Activated CD8-positive, alpha-beta T cell treated with anti-CD3 and anti-CD28 coated beads for 36 hours (primary cell): ENCODE measurements at regions of chr15 and their contacts with region 1.

Region 1: DNA sequence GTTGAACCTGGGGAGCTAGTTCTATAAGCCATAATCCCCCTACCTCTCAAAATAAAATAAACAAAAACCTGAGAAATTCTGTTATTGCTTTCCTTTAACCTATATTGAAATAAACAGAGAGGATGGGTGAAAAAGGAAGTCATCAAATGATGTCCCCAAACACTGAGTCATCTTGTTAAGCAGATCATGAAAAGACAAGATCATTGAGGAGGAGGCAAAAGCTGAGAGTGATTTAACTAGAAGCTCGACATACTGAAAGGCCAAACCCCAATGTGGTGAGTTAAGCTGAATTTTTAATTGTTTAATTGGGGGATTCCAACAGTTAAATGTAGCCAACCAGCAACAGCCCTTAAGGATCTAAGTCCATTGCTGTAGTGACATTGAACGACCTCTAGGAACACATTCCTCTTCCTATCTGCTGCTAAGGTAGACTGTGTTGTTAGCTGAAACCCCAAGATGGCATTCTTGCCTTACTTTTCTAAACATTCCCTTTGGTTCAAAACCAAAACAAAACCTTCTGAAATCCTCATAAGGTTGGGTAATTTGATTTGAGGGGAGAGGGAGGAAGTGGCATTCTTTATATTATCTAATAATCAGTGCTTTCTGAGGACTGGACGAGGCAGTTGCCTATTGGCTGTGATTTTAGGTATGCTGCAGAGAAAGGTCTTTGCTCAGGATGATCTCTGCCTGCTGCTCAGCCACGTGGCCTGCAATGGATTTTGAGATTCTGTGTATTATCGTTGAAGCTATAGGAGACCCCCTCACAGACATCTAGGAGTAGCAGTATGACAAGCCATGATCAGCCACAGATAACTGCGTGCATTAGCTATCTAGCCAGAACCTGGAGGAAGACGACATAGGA is 62.7 kb upstream of the BNIP2 start:
- DNase-seq: no peak
- ATAC-seq: peak; percentile 91
- H3K4me3 Mint-ChIP-seq: no peak overlapping the region
- H3K27ac Mint-ChIP-seq: no peak overlapping the region
- H3K4me1 Mint-ChIP-seq: peaks cover 7% of the 10 kb centered on the region
- H3K27me3 Mint-ChIP-seq: peaks cover 2% of the 10 kb centered on the region
- CTCF ChIP-seq: peak; percentile 68

Region 2: GRCh38 chr15:59656897-59657634 is 94.7 kb before region 1 on chr15 and contains the start of gene GTF2A2:
- CTCF ChIA-PET with region 1: no interaction called
- POLR2A ChIA-PET with region 1: no interaction called
- intact Hi-C with region 1: no loop called
- DNase-seq: peak; percentile 97
- ATAC-seq: peak; percentile 100
- H3K4me3 Mint-ChIP-seq: peak within 1 kb of the TSS; percentile 32
- H3K27ac Mint-ChIP-seq: no peak within 1 kb of the TSS
- H3K4me1 Mint-ChIP-seq: peaks cover 7% of the 10 kb centered on the region
- H3K27me3 Mint-ChIP-seq: no peaks in the 10 kb centered on the region
- CTCF ChIP-seq: no peak
- total RNA-seq, gene GTF2A2: 167 to 173 TPM

Region 3: GRCh38 chr15:59762558-59762957 is 10.8 kb after region 1 on chr15:
- CTCF ChIA-PET with region 1: interaction called, 12 read pairs
- POLR2A ChIA-PET with region 1: no interaction called
- intact Hi-C with region 1: no loop called
- DNase-seq: peak; percentile 4
- ATAC-seq: no peak
- H3K4me3 Mint-ChIP-seq: no peak overlapping the region
- H3K27ac Mint-ChIP-seq: no peak overlapping the region
- H3K4me1 Mint-ChIP-seq: no peaks in the 10 kb centered on the region
- H3K27me3 Mint-ChIP-seq: no peaks in the 10 kb centered on the region
- CTCF ChIP-seq: no peak

Region 4: DNA sequence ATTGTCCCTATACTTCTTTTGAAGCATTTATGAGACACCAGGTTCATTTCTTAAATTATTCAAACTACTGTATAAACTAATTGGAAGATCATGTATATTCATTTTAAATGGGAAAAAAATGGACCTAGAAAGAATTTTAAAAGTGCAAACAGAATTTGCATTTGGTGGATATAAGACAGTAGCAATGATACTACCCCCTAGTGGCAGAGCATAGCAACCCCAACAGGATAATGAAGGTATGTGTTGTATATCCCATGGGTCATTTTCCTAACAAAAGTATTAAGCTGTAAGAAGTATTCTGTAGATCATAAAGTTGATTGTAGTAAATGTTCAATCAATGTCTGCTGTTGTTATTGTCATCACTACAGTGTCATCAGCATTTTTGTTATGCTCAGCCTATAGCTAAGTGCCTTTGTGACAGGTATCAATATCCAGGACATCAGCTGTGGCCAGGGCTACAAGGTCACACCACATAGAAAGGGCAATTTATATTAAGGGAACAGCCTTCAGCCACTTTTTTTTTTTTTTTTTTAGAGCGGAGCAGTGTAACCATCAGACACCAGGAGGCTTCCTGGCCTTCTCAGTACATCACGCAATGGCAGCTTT is 428.1 kb after region 1 on chr15:
- CTCF ChIA-PET with region 1: interaction called, 8 read pairs
- POLR2A ChIA-PET with region 1: no interaction called
- intact Hi-C with region 1: loop called (anchors 10 kb)
- DNase-seq: peak; percentile 61
- ATAC-seq: peak; percentile 68
- H3K4me3 Mint-ChIP-seq: no peak overlapping the region
- H3K27ac Mint-ChIP-seq: no peak overlapping the region
- H3K4me1 Mint-ChIP-seq: no peaks in the 10 kb centered on the region
- H3K27me3 Mint-ChIP-seq: peaks cover 15% of the 10 kb centered on the region
- CTCF ChIP-seq: peak; percentile 96